Cardiac septum (tissue), 1 donor: ENCODE measurements at regions of chr12 and their contacts with region 1.

Region 1: DNA sequence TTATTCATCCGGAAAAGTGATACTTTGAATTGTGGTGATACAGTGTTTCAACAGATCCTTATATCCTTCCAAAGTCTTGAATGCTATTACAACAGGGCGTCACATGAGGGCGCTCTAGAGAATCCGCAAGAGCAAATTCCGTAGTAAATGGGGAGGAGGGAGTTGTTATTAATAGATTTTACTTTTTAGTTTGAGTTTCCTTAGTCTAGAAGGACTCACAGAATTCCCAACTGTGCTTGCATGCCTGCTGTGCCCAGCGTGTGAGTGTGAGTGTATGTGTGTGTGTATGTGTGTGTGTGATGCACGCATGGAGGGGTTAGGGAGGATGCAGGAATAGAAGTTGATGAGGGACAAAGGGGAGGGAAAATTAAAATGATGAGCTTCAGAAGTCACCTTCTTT is 375.3 kb downstream of the C12orf75 start:
- DNase-seq: no peak

Region 2: DNA sequence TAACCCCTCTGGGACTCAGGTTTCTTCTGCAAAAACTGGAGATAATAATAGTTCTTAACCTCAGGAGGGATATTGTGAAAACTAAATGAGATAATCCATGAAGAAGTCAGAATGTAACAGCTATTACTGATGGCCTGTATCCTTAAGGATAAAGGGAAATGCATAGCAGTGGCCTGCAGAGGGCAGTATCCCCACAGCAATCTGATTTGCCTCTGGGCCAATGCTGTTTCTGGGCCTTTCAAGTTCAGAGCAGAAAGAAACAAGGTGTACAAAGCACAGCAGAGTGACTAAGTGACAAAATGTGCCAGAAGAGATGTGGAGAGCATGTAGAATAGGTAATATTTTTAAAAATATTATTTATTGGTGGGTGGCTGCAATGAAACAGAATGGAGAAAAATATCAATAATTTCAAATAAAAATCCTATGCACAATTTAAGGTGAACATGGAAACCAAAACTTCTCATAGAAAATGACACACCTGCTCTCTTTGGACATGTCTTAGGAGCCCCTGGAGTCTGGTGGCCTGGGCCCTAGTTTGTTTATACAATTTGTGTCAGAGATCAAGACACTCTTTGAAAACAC is 285.0 kb before region 1 on chr12:
- intact Hi-C with region 1: loop called (anchors 10 kb)
- DNase-seq: peak; percentile 82

Region 3: GRCh38 chr12:105547786-105548185 is 158.0 kb before region 1 on chr12:
- intact Hi-C with region 1: no loop called
- DNase-seq: no peak

Region 4: GRCh38 chr12:105590541-105590940 is 115.2 kb before region 1 on chr12:
- intact Hi-C with region 1: no loop called
- DNase-seq: no peak

Region 5: DNA sequence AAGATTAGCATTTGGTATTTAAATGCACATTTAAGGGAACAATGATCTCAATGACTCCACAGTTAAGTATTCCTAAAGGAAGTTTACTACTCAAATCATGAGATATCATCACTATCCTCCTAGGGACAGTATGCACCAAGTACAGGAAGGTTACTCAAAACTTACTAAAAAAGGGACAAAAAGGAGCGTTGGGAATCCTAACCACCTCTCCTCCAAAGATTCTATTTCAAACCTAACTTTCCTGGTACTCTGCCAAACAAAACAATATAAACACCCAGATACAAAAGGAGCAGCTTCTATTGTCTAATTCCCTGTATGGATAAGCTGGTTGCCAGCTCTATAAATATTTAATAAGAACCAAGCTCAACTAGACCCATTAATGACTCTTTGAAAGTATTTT is 55.3 kb after region 1 on chr12:
- intact Hi-C with region 1: no loop called
- DNase-seq: no peak

Region 6: GRCh38 chr12:106039242-106039641 is 333.5 kb after region 1 on chr12:
- intact Hi-C with region 1: no loop called
- DNase-seq: no peak

Region 7: GRCh38 chr12:106066051-106066705 is 360.4 kb after region 1 on chr12:
- intact Hi-C with region 1: loop called (anchors 10 kb)
- DNase-seq: no peak

Region 8: GRCh38 chr12:106205208-106206071 is 499.7 kb after region 1 on chr12:
- intact Hi-C with region 1: loop called (anchors 10 kb)
- DNase-seq: peak; percentile 81